Right ventricle myocardium inferior (tissue), 1 donor: ENCODE measurements at regions of chr6 and their contacts with region 1.

Region 1: GRCh38 chr6:786946-787763 is 94.2 kb upstream of the EXOC2 start:
- DNase-seq: no peak
- ATAC-seq: no peak

Region 2: GRCh38 chr6:624979-625378 is 162.2 kb before region 1 on chr6:
- intact Hi-C with region 1: loop called (anchors 10 kb)
- DNase-seq: no peak
- ATAC-seq: peak; percentile 72